ENCODE measurements at regions of chr10 and their contacts with region 1.

Region 1: DNA sequence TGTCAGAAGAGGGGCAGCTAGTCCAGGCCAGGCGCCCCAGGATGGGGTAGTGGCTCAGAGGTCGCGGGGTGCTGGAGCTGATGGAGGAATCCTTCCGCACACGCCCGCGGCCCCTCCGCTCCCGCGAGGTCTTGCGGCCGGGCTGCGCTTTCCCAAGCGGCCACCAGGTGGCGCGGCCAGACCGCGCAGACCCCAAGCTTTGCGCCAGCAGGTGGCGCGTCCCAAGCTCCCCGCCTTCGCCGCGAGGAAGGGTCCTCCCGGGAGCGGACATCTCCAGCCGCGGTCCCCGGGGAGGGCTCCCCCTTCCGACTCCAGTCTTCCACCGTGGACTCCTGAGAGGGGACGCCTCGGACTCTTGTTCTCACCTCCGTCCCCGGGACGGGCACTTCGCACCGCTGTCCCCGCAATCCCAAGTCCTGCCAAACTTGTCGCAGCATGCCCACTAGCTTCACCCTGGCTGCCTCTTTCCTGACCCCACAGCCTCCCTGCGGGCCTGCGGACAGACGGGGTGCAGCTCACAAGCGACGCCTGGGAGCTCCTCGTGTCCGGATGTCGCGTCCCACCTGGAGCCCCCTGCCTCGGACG is 19.4 kb downstream of the KCNK18 start:
- DNase-seq: peak; percentile 83
- ATAC-seq: peak; percentile 88
- H3K4me3 Mint-ChIP-seq: peak overlapping the region; percentile 63
- H3K27ac Mint-ChIP-seq: no peak overlapping the region
- H3K4me1 Mint-ChIP-seq: peaks cover 3% of the 10 kb centered on the region
- H3K27me3 Mint-ChIP-seq: peaks cover 26% of the 10 kb centered on the region

Region 2: DNA sequence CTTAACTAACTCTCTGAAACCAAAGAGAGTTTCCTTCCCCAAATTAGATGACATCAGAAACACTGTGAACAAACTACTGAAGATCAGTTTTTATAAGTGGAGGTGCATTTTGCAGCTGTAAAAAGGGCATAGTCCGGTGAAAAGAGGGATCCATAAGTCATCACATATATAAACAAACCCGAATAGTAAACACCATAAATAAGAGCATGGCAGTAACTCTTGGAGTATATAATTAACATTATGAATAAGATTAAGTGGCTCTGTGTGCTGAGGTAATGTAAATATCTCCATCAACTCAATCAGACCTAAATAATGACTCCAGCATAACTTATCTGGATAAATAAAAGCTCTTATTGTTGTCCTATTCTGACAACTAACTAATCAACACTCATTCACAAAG is 168.8 kb before region 1 on chr10:
- CTCF ChIA-PET with region 1: no interaction called
- POLR2A ChIA-PET with region 1: no interaction called
- intact Hi-C with region 1: no loop called
- DNase-seq: no peak
- ATAC-seq: no peak
- H3K4me3 Mint-ChIP-seq: no peak overlapping the region
- H3K27ac Mint-ChIP-seq: no peak overlapping the region
- H3K4me1 Mint-ChIP-seq: no peaks in the 10 kb centered on the region
- H3K27me3 Mint-ChIP-seq: peaks cover 5% of the 10 kb centered on the region

Region 3: DNA sequence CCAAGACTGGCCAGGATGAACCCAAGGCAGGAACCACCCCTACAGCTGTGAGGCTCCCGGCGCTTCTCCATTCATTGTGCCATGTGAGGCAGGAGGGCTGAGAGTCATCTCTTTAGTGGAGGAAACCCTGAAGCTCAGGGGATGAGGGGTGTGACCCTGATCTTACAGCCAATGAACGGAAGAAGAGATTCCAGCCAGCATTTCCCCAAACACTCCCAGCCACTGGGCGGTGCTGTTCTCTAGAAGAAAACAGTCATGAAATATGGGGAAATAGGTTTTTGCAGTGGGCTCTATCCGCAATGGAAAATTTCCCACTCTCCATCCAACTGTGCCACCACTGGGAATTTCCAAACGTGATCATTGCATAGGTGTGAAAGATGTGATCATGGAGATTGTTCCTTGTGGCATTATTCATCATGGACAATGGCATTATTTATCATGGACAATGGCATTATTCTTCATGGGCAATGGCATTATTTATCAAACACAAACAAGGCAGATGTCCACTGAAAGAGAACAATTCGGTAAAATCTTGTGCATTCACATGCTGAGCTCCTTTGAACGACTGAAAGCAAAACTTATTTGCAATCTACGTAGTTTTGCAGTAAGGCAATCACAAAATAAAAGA is 10.2 kb after region 1 on chr10:
- CTCF ChIA-PET with region 1: interaction called, 26 read pairs
- POLR2A ChIA-PET with region 1: no interaction called
- intact Hi-C with region 1: no loop called
- DNase-seq: peak; percentile 37
- ATAC-seq: peak; percentile 39
- H3K4me3 Mint-ChIP-seq: no peak overlapping the region
- H3K27ac Mint-ChIP-seq: no peak overlapping the region
- H3K4me1 Mint-ChIP-seq: no peaks in the 10 kb centered on the region
- H3K27me3 Mint-ChIP-seq: peaks cover 18% of the 10 kb centered on the region

Region 4: GRCh38 chr10:117284716-117285494 is 68.2 kb after region 1 on chr10:
- CTCF ChIA-PET with region 1: interaction called, 10 read pairs
- POLR2A ChIA-PET with region 1: no interaction called
- intact Hi-C with region 1: no loop called
- DNase-seq: no peak
- ATAC-seq: no peak
- H3K4me3 Mint-ChIP-seq: no peak overlapping the region
- H3K27ac Mint-ChIP-seq: no peak overlapping the region
- H3K4me1 Mint-ChIP-seq: peaks cover 8% of the 10 kb centered on the region
- H3K27me3 Mint-ChIP-seq: no peaks in the 10 kb centered on the region

Region 5: GRCh38 chr10:117375360-117376178 is 158.9 kb after region 1 on chr10 and contains the start of gene PDZD8:
- CTCF ChIA-PET with region 1: interaction called, 4 read pairs
- POLR2A ChIA-PET with region 1: no interaction called
- intact Hi-C with region 1: loop called (anchors 2 kb)
- DNase-seq: peak; percentile 94
- ATAC-seq: peak; percentile 85
- H3K4me3 Mint-ChIP-seq: peak within 1 kb of the TSS; percentile 92
- H3K27ac Mint-ChIP-seq: peak within 1 kb of the TSS; percentile 72
- H3K4me1 Mint-ChIP-seq: peaks cover 29% of the 10 kb centered on the region
- H3K27me3 Mint-ChIP-seq: peaks cover 15% of the 10 kb centered on the region
- total RNA-seq, gene PDZD8: 12.5 to 15.9 TPM

Region 6: GRCh38 chr10:118241229-118242137 is 1024.8 kb after region 1 on chr10:
- CTCF ChIA-PET with region 1: no interaction called
- POLR2A ChIA-PET with region 1: no interaction called
- intact Hi-C with region 1: loop called in 1 of 2 experiments (anchors 2 kb)
- DNase-seq: peak; percentile 81
- ATAC-seq: no peak
- H3K4me3 Mint-ChIP-seq: no peak overlapping the region
- H3K27ac Mint-ChIP-seq: no peak overlapping the region
- H3K4me1 Mint-ChIP-seq: no peaks in the 10 kb centered on the region
- H3K27me3 Mint-ChIP-seq: peaks cover 36% of the 10 kb centered on the region